Colonic mucosa (tissue), 4 donors: ENCODE measurements at regions of chr6 and their contacts with region 1.

Region 1: DNA sequence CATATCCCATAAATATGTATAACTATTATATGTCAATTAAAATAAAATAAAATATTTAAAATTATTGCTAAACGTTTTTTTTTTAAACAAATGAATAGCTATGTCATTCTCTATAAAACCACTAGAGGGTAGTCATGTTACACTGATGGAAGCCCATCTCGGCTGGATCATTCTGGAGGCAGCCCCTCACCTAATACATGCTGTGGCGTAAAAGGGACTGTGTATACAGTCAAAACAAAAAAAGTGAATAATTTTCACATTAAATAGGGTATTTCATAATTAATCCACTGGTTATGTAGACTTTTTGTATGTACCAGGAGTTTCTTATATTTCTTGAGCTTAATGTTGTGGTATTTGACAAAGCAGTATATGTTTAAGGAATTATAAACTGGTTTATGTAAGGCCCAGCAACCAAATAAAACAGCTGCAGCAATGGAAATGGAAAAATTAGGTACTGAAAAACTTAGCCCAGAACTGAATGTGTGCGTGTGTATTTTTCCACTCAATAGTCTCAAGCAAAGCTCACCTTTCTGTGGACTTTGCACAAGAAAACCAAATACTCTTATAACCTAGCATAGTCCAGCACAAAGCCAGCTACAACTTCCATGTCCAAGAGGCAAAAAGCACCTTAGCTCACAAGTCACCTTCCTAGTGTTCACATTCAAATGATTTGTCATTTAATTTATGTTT is 81.7 kb downstream of the COL9A1 start:
- DNase-seq: no peak
- H3K4me3 ChIP-seq: no peak overlapping the region
- H3K27ac ChIP-seq: no peak overlapping the region
- H3K4me1 ChIP-seq: no peaks in the 10 kb centered on the region
- H3K27me3 ChIP-seq: no peaks in the 10 kb centered on the region
- CTCF ChIP-seq: peak; percentile 81

Region 2: GRCh38 chr6:70028926-70029325 is 192.2 kb before region 1 on chr6:
- intact Hi-C with region 1: no loop called
- DNase-seq: no peak
- H3K4me3 ChIP-seq: no peak overlapping the region
- H3K27ac ChIP-seq: no peak overlapping the region
- H3K4me1 ChIP-seq: no peaks in the 10 kb centered on the region
- H3K27me3 ChIP-seq: no peaks in the 10 kb centered on the region
- CTCF ChIP-seq: no peak

Region 3: DNA sequence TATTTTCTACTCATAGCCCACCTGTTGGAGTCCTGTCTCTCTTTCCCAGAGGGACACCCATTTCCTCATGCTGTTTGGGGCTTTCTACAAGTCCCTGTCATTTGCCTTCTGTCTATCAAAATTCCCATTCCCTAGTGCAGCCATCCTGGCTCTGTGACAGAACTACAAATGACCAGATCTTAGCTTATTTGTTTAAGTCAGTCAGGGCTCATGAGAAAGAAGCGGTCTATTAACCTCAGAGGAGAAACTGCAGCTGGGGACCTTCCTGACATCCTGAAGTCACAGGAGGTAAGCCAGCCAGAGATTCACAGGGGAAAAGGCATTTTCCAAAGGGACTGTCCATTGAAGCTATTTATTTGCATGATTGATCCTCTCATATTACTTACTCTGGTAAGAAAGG is 83.4 kb after region 1 on chr6:
- intact Hi-C with region 1: loop called (anchors 5 kb)
- DNase-seq: no peak
- H3K4me3 ChIP-seq: no peak overlapping the region
- H3K27ac ChIP-seq: no peak overlapping the region
- H3K4me1 ChIP-seq: no peaks in the 10 kb centered on the region
- H3K27me3 ChIP-seq: no peaks in the 10 kb centered on the region
- CTCF ChIP-seq: no peak

Region 4: GRCh38 chr6:70369332-70369950 is 148.3 kb after region 1 on chr6:
- intact Hi-C with region 1: loop called (anchors 5 kb)
- DNase-seq: peak; percentile 76
- H3K4me3 ChIP-seq: no peak overlapping the region
- H3K27ac ChIP-seq: no peak overlapping the region
- H3K4me1 ChIP-seq: no peaks in the 10 kb centered on the region
- H3K27me3 ChIP-seq: no peaks in the 10 kb centered on the region
- CTCF ChIP-seq: peak; percentile 90

Region 5: DNA sequence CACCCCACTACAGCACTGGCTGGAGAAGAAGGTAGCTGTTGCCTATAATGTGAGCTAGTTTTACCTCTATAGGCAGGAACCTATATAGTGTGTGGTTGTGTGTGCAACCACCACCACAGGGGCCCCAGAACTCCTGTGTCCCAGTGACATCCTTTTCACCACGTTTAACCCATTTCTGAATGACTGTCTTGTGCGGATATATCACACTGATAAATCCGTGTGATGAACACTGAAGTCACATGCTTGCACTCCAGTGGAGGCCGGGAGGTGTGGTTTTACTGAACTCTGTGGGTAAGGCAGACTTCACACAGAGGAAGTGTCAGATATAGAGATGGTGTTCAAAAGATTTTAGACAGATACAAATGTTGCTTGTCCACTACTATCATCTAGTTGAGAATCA is 378.0 kb after region 1 on chr6:
- intact Hi-C with region 1: no loop called
- DNase-seq: no peak
- H3K4me3 ChIP-seq: no peak overlapping the region
- H3K27ac ChIP-seq: no peak overlapping the region
- H3K4me1 ChIP-seq: no peaks in the 10 kb centered on the region
- H3K27me3 ChIP-seq: no peaks in the 10 kb centered on the region
- CTCF ChIP-seq: no peak